ENCODE measurements at regions of chr21 and their contacts with region 1.

Region 1: DNA sequence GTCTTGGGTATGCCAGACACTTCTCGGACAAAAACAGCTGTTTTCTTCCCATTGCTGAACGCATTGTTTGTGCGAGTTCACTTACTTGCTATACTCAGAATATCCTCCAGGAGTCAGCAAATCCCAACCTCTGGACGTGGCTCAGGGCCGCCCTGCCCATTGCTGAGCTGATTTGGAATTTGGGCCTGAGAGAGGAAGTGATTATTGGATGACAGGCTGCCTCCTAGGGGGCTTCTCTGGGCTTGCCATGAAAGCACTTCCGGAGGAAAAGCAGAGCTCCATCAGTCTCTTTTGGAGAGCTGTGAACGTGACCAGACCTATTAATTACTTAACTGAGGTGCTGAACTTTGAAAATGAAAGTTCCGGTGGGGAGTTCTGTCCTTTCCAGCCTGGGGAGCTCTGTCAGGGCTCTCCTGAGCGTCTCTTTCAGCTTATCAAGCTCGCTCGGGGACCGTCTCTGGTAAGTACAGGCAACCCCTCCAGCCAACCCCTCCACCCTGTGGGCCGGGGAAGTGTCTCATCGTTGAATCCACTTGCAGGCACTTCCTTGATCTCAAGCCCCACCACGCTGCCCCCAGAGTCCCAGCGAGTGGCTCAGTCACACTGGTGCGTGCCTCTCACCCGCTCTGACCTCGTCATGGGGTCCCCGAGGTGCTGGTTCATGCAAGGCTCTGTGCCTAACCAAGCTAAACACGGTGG is 76.9 kb downstream of the CLIC6 start:
- DNase-seq: peak; percentile 27 to 65 (median 49)
- ATAC-seq: peak; percentile 92
- H3K4me3 ChIP-seq: no peak overlapping the region
- H3K4me3 Mint-ChIP-seq: peak overlapping the region; percentile 25 to 75 (median 60)
- H3K27ac ChIP-seq: no peak overlapping the region
- H3K27ac Mint-ChIP-seq: no peak overlapping the region
- H3K4me1 ChIP-seq: no peaks in the 10 kb centered on the region
- H3K4me1 Mint-ChIP-seq: peaks cover 0 to 5% (median 4%) of the 10 kb centered on the region in 7 donors
- H3K27me3 ChIP-seq: no peaks in the 10 kb centered on the region
- H3K27me3 Mint-ChIP-seq: peaks cover 0 to 19% (median 4%) of the 10 kb centered on the region in 5 donors

Region 2: GRCh38 chr21:34693192-34693810 is 52.4 kb before region 1 on chr21:
- CTCF ChIA-PET with region 1: interaction called, 7 read pairs
- POLR2A ChIA-PET with region 1: no interaction called
- intact Hi-C with region 1: loop called in 1 of 2 experiments (anchors 1 kb)
- DNase-seq: peak in 7 of 9 donors; percentile 33 to 63 (median 58)
- ATAC-seq: peak; percentile 72
- H3K4me3 ChIP-seq: no peak overlapping the region
- H3K4me3 Mint-ChIP-seq: no peak overlapping the region
- H3K27ac ChIP-seq: no peak overlapping the region
- H3K27ac Mint-ChIP-seq: no peak overlapping the region
- H3K4me1 ChIP-seq: no peaks in the 10 kb centered on the region
- H3K4me1 Mint-ChIP-seq: peaks cover 0 to 10% (median 3%) of the 10 kb centered on the region in 7 donors
- H3K27me3 ChIP-seq: peaks cover 0 to 4% of the 10 kb centered on the region in 2 donors
- H3K27me3 Mint-ChIP-seq: peaks cover 2 to 43% (median 10%) of the 10 kb centered on the region in 5 donors

Region 3: GRCh38 chr21:35508139-35508888 is 762.6 kb after region 1 on chr21:
- CTCF ChIA-PET with region 1: interaction called, 3 read pairs
- POLR2A ChIA-PET with region 1: no interaction called
- intact Hi-C with region 1: loop called in 1 of 2 experiments (anchors 2 kb)
- DNase-seq: peak in 2 of 9 donors; percentile 18 to 25
- ATAC-seq: peak; percentile 77
- H3K4me3 ChIP-seq: no peak overlapping the region
- H3K4me3 Mint-ChIP-seq: peak overlapping the region in 1 of 10 donors; percentile 23
- H3K27ac ChIP-seq: no peak overlapping the region
- H3K27ac Mint-ChIP-seq: peak overlapping the region in 6 of 9 donors; percentile 38 to 70 (median 60)
- H3K4me1 ChIP-seq: peaks cover 0 to 37% of the 10 kb centered on the region in 2 donors
- H3K4me1 Mint-ChIP-seq: peaks cover 30 to 77% (median 70%) of the 10 kb centered on the region in 7 donors
- H3K27me3 ChIP-seq: no peaks in the 10 kb centered on the region
- H3K27me3 Mint-ChIP-seq: peaks cover 0 to 3% (median 0%) of the 10 kb centered on the region in 5 donors

Region 4: DNA sequence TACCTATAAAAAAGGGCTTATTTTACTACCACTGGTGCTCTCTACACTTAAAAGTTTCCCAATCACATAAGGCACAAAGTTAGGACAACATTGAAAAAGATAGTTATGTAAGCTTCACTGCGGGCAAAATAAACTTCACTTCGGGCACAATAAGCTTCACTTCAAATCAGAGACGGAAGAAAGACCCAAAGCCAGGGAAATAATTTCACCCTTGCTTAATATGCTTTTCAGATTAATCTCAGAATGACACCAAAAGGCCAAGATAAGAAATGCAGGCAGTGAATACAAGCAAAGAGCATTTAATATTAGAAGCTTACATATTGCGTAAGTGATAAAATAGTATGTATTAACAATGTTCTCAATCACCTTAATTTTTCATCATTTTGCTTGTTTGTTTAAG is 870.4 kb after region 1 on chr21:
- CTCF ChIA-PET with region 1: interaction called, 4 read pairs
- POLR2A ChIA-PET with region 1: no interaction called
- intact Hi-C with region 1: loop called in 1 of 2 experiments (anchors 1 kb)
- DNase-seq: peak in 6 of 9 donors; percentile 2 to 44 (median 28)
- ATAC-seq: no peak
- H3K4me3 ChIP-seq: no peak overlapping the region
- H3K4me3 Mint-ChIP-seq: no peak overlapping the region
- H3K27ac ChIP-seq: no peak overlapping the region
- H3K27ac Mint-ChIP-seq: no peak overlapping the region
- H3K4me1 ChIP-seq: no peaks in the 10 kb centered on the region
- H3K4me1 Mint-ChIP-seq: peaks cover 0 to 6% (median 3%) of the 10 kb centered on the region in 7 donors
- H3K27me3 ChIP-seq: no peaks in the 10 kb centered on the region
- H3K27me3 Mint-ChIP-seq: peaks cover 0 to 11% (median 0%) of the 10 kb centered on the region in 5 donors

Region 5: GRCh38 chr21:35840197-35840799 is 1094.6 kb after region 1 on chr21:
- CTCF ChIA-PET with region 1: interaction called, 32 read pairs
- POLR2A ChIA-PET with region 1: no interaction called
- intact Hi-C with region 1: loop called in 1 of 2 experiments (anchors 1 kb)
- DNase-seq: peak in 7 of 9 donors; percentile 30 to 69 (median 52)
- ATAC-seq: peak; percentile 69
- H3K4me3 ChIP-seq: no peak overlapping the region
- H3K4me3 Mint-ChIP-seq: no peak overlapping the region
- H3K27ac ChIP-seq: no peak overlapping the region
- H3K27ac Mint-ChIP-seq: no peak overlapping the region
- H3K4me1 ChIP-seq: peaks cover 0 to 4% of the 10 kb centered on the region in 2 donors
- H3K4me1 Mint-ChIP-seq: peaks cover 0 to 18% (median 5%) of the 10 kb centered on the region in 7 donors
- H3K27me3 ChIP-seq: no peaks in the 10 kb centered on the region
- H3K27me3 Mint-ChIP-seq: peaks cover 0 to 6% (median 0%) of the 10 kb centered on the region in 5 donors

Region 6: DNA sequence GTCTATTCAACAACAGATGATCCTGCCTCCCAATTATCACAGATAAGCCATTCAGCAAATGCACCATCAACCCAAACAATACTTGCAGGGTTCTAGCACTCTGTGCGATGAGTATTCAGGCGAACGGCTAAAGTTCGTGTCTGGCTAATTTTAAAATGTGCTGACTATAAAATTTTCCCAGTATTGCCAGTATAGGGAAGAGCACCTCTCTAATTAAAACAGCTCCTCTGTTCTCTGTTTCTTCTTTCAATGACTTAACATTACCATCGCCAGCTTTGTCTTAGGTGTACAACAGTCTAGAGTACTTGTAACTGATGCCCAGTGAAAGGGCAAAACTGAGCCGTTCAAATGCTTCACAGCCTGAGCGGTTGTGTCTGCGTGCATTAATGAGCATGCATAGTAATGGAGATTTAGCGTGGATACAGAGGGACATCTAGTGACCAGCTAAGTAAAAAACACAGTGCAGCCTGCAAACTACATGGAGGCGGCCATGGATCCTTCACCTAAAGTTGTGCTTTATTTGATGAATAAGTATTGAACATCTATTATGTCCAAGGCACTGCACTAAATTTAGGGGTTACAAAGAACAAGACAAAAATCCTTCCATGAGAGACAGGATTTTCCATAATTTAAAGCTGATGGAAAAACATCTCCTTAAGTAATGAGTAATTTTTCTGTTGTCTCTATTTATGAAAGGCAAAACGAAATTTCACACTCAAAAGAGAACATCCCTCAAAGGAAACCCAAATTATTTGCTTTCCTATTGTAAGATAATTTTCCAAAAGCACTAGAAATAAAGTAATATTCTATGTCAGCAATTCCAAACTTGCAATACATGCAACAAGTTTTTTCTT is 1194.6 kb after region 1 on chr21:
- CTCF ChIA-PET with region 1: no interaction called
- POLR2A ChIA-PET with region 1: no interaction called
- intact Hi-C with region 1: loop called in 1 of 2 experiments (anchors 1 kb)
- DNase-seq: no peak
- ATAC-seq: peak; percentile 57
- H3K4me3 ChIP-seq: no peak overlapping the region
- H3K4me3 Mint-ChIP-seq: no peak overlapping the region
- H3K27ac ChIP-seq: no peak overlapping the region
- H3K27ac Mint-ChIP-seq: no peak overlapping the region
- H3K4me1 ChIP-seq: no peaks in the 10 kb centered on the region
- H3K4me1 Mint-ChIP-seq: peaks cover 0 to 1% (median 0%) of the 10 kb centered on the region in 7 donors
- H3K27me3 ChIP-seq: no peaks in the 10 kb centered on the region
- H3K27me3 Mint-ChIP-seq: peaks cover 0 to 14% (median 8%) of the 10 kb centered on the region in 5 donors

Measured in naive thymus-derived CD4-positive, alpha-beta T cell (primary cell).